B cell (primary cell): ENCODE measurements at regions of chr19 and their contacts with region 1.

Region 1: DNA sequence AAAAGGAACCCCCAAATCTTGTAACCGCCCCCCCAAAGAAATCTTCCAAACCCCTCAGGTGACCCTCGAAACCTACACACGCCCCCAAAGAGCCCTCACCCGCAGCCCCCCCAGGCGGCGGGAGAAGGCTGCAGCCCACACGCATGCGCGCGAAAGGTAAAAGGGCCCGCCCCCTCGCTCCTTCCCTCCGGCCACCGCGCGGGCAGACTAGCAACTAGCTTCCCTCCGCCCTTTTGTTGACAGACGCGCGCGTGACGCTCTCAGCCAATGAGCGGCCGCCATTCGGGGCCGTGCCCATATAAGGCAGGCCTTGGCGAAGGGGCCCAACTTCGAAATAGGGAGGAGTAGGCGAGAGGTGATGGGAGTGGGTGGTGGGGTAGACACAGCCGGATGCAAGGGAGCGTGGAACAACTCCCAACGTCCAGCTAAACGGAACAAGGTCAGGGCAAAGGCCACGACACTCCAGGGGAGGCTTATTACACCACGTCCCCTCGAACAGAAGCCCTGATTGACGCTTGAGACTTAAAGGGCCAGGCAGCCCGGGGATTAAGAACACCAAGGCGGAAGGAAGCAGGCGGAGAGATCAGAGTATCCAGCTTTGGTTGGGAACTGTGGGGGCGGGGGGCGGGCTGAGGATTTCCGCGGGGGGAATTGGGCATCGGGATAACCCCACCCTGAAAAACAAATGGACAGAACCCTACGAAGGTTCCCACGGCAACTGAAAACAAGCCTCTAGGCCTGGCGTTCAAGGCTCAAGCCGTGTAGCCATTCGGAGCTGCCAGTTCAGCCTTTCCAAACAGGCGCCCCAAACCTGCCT is 13.3 kb downstream of the FBXO46 start:
- DNase-seq: peak; percentile 97
- ATAC-seq: peak; percentile 95
- H3K4me3 ChIP-seq: peak overlapping the region; percentile 76 to 93 (median 82)
- H3K4me3 Mint-ChIP-seq: peak overlapping the region; percentile 91
- H3K27ac ChIP-seq: peak overlapping the region; percentile 76 to 94
- H3K27ac Mint-ChIP-seq: peak overlapping the region; percentile 97
- H3K4me1 ChIP-seq: peaks cover 18 to 25% of the 10 kb centered on the region in 2 donors
- H3K4me1 Mint-ChIP-seq: peaks cover 39% of the 10 kb centered on the region
- H3K27me3 ChIP-seq: no peaks in the 10 kb centered on the region
- H3K27me3 Mint-ChIP-seq: no peaks in the 10 kb centered on the region
- CTCF ChIP-seq: no peak

Region 2: GRCh38 chr19:45730389-45731288 is 13.3 kb after region 1 on chr19 and contains the start of gene FBXO46:
- CTCF ChIA-PET with region 1: interaction called, 10 read pairs
- POLR2A ChIA-PET with region 1: interaction called, 25 read pairs
- intact Hi-C with region 1: loop called (anchors 1 kb)
- DNase-seq: peak; percentile 96
- ATAC-seq: peak; percentile 97
- H3K4me3 ChIP-seq: peak within 1 kb of the TSS; percentile 68 to 98 (median 87)
- H3K4me3 Mint-ChIP-seq: peak within 1 kb of the TSS; percentile 94
- H3K27ac ChIP-seq: peak within 1 kb of the TSS; percentile 54 to 94
- H3K27ac Mint-ChIP-seq: peak within 1 kb of the TSS; percentile 94
- H3K4me1 ChIP-seq: peaks cover 11 to 25% of the 10 kb centered on the region in 2 donors
- H3K4me1 Mint-ChIP-seq: peaks cover 28% of the 10 kb centered on the region
- H3K27me3 ChIP-seq: no peaks in the 10 kb centered on the region
- H3K27me3 Mint-ChIP-seq: no peaks in the 10 kb centered on the region
- CTCF ChIP-seq: peak; percentile 26
- total RNA-seq, gene FBXO46: 43.7 and 44.5 TPM in 2 replicates